Gastrocnemius medialis (tissue), 4 donors: ENCODE measurements at regions of chr6 and their contacts with region 1.

Region 1: GRCh38 chr6:168370310-168370991 is 50.9 kb upstream of the DACT2 start:
- DNase-seq: peak in 1 of 2 donors; percentile 49
- ATAC-seq: peak; percentile 56 to 65
- H3K4me3 ChIP-seq: no peak overlapping the region
- H3K27ac ChIP-seq: no peak overlapping the region
- H3K4me1 ChIP-seq: no peaks in the 10 kb centered on the region
- H3K27me3 ChIP-seq: peaks cover 0 to 8% (median 0%) of the 10 kb centered on the region in 3 donors
- CTCF ChIP-seq: peak; percentile 34 to 78 (median 66)
- POLR2A ChIP-seq: no peak

Region 2: GRCh38 chr6:168526841-168527281 is 156.4 kb after region 1 on chr6:
- in situ Hi-C with region 1: no loop called
- intact Hi-C with region 1: no loop called
- DNase-seq: no peak
- ATAC-seq: peak; percentile 53 to 66
- H3K4me3 ChIP-seq: no peak overlapping the region
- H3K27ac ChIP-seq: peak overlapping the region; percentile 14 to 44 (median 34)
- H3K4me1 ChIP-seq: no peaks in the 10 kb centered on the region
- H3K27me3 ChIP-seq: peaks cover 0 to 8% (median 0%) of the 10 kb centered on the region in 3 donors
- CTCF ChIP-seq: no peak
- POLR2A ChIP-seq: no peak

Region 3: DNA sequence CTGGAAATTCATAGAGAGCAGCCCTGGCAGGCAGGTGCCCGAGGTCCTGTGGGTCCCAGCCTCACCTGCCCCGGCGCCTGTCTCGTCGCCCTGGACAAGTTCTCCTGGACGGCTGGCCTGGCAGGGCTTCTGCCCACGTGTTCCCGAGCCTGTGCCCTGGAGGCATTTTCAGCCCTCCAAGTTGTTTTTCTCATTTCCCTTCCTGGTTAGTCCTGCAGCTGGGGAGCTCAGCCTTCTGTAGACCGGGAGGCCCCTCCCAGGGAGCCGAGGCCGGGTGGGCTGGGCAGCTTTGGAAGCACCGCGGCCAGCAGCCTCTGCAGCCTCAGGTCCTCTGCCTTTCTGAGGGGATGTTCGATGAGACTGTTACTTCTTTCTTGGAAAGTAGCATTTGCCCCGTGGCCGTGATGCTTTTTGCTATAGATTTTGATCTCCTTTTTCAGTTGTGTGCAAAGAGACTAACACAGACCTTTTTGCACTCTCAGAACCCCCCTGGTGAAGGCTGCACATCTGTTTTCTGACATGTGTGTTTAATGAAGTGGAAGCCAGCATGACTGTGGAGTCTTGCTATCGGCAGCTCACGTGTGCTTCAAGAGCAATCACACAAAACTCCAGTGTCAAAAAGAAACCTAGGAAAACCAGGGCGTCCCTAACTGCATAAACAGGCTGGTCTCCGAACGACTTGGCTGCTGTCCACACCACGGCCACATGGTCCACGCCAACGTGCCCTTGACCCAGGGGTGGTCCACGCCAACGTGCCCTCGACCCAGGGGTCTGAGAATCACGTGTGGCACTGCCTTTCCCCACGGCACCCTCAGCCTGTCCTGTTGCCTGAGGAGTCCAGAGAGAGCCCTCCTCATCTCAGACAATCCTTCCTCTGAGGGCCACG is 278.0 kb after region 1 on chr6:
- in situ Hi-C with region 1: no loop called
- intact Hi-C with region 1: loop called (anchors 10 kb)
- DNase-seq: no peak
- ATAC-seq: no peak
- H3K4me3 ChIP-seq: no peak overlapping the region
- H3K27ac ChIP-seq: no peak overlapping the region
- H3K4me1 ChIP-seq: no peaks in the 10 kb centered on the region
- H3K27me3 ChIP-seq: peaks cover 11 to 16% (median 15%) of the 10 kb centered on the region in 3 donors
- CTCF ChIP-seq: no peak
- POLR2A ChIP-seq: no peak

Region 4: GRCh38 chr6:168884646-168885086 is 514.2 kb after region 1 on chr6:
- in situ Hi-C with region 1: loop called (anchors 5 to 25 kb)
- intact Hi-C with region 1: loop called (anchors 1 kb)
- DNase-seq: peak in 1 of 2 donors; percentile 25
- ATAC-seq: peak; percentile 68 to 69
- H3K4me3 ChIP-seq: peak overlapping the region in 3 of 4 donors; percentile 3 to 41 (median 40)
- H3K27ac ChIP-seq: no peak overlapping the region
- H3K4me1 ChIP-seq: peaks cover 0 to 6% of the 10 kb centered on the region in 2 donors
- H3K27me3 ChIP-seq: no peaks in the 10 kb centered on the region
- CTCF ChIP-seq: peak; percentile 60 to 89 (median 76)
- POLR2A ChIP-seq: no peak

Region 5: DNA sequence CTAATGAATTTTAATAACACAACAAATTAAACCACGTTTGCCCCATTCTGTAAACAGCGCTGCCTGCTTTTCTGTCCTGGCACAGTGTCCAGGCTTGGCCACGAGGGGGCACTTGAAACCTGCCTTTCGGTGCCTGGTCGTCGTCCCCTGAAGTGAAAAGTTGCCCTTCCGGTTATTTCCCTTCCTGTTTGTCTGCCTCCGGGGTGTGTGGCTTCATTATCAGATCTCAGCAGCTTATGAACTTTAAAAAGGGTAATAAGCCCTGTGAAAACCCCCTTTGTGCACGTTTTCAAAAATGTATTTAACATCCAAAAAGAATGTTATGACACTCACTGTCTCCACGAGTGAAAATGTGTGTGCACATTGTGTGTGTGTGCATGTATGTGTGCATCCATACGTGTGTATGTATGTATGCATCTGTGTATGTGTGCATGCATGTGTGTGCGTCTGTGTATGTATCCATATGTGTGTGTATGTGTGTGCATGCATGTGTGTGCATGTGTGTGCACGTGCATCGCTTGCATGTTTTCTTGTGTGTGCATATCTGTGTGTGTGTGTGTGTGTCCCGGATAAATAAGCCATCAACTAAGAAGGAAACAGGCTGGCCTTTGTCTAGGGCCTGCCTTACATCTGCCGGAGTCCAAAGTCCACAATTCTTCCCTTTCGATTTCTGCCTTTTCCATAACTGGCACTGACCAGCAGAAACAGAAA is 524.8 kb after region 1 on chr6:
- in situ Hi-C with region 1: loop called in 1 of 4 experiments (anchors 25 kb)
- intact Hi-C with region 1: no loop called
- DNase-seq: peak; percentile 47 to 57
- ATAC-seq: peak; percentile 74 to 78
- H3K4me3 ChIP-seq: peak overlapping the region; percentile 30 to 45 (median 36)
- H3K27ac ChIP-seq: no peak overlapping the region
- H3K4me1 ChIP-seq: peaks cover 0 to 5% of the 10 kb centered on the region in 2 donors
- H3K27me3 ChIP-seq: no peaks in the 10 kb centered on the region
- CTCF ChIP-seq: peak; percentile 67 to 90 (median 80)
- POLR2A ChIP-seq: no peak